ENCODE measurements at regions of chr1 and their contacts with region 1.

Region 1: DNA sequence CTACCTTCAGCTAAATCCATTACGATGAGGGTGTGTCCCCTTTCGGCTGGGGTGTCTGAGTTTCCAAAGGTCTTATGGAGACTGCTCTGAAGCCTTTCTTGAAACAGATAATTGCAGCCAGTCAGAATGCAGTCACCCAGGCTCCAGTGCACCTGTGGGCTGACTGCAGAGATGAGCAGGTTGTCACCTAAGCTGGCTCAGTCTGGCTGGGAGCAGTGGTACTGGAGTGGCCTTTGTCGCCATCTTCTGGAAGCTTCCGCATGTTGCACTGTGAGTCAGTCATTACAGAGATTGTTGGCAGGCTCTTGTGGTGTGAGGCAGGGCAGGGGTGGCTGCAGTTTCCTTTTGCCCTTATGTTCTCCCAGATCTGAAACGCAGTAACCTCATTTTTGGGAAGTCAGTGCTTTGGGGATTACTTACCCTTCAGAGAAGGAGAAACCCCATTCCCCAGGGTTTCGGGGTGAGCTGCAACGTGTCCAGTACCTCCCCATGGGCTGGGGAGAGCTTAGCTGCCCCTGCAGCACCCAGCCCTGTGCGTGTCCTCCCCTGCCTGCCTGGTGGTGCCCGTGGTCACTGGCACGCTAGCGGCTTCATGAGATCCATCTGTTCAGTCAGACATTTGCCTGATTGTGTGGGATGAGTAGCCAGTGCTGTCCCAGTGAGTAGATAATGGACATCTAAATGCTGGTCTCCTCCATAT is 48.0 kb downstream of the SMYD2 start:
- DNase-seq: peak; percentile 69
- ATAC-seq: peak; percentile 90
- H3K4me3 ChIP-seq: no peak overlapping the region
- H3K27ac ChIP-seq: no peak overlapping the region
- H3K4me1 ChIP-seq: 0 out of 2 replicates have a peak, but pooled peaks cover 2% of the 10 kb centered on the region
- H3K27me3 ChIP-seq: no peaks in the 10 kb centered on the region
- CTCF ChIP-seq: peak; percentile 95

Region 2: DNA sequence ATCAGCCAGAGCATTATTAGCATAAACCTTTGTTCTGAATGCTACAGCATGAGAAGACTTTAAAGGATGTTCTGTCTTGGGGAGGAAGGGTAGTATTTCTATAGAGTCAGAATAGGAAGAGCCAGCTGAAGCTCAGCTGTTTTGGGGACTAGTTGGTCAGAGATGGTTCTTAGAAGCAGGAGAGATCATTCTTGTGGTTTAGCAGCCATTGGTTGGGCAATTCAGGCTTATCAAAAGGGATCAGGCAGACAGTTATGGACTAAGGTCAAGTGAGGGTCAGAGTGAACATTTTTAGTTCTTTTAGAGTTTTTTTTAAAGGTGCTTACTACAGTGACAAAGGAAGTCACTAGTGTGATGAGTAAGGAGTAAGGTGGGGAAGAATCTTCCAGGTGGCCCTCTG is 1032.4 kb before region 1 on chr1:
- CTCF ChIA-PET with region 1: no interaction called
- POLR2A ChIA-PET with region 1: no interaction called
- in situ Hi-C with region 1: no loop called
- intact Hi-C with region 1: no loop called
- DNase-seq: no peak
- ATAC-seq: no peak
- H3K4me3 ChIP-seq: no peak overlapping the region
- H3K27ac ChIP-seq: no peak overlapping the region
- H3K4me1 ChIP-seq: no peaks in the 10 kb centered on the region
- H3K27me3 ChIP-seq: no peaks in the 10 kb centered on the region
- CTCF ChIP-seq: no peak

Region 3: DNA sequence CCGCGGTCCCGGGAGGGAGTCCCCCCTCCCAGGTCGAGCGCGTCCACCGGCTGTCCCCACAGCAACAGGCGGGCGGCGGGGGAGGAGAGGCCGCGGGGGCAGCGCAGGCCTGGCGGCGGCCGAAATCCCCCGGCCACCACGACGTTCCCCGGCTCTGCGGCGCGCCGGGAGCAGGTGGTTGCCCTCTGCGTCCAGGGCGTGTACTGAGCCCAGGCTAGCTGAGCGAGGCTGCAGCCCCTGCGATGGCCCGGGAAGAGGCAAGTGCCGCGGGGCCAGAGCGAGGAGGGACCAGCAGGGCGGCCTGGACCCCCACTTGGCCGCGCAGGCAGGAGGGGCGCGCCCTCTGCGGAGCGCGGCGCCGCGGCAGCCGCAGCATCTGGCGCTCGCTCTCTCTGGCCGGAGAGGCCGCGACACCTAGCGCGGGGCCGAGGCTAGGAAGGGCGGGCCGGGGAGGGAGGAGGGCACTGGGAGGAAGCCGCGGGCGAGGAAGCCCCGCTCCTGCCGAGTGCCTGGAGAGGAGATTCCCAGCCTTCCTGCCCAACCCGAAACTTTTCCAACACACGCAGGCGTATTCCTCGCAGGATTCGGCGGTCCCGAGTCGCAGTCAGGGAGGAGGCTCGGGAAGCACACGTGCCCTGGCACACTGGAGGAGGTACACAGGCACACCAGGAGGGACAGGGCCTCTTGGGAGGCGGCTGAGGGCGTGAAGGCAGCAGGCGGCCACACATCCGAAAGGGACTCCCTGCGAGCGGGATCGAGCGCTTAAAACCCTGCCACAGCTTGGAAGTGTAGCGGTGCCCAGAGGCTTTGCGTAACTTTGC is 346.0 kb before region 1 on chr1:
- CTCF ChIA-PET with region 1: interaction called, 12 read pairs
- POLR2A ChIA-PET with region 1: no interaction called
- in situ Hi-C with region 1: no loop called
- intact Hi-C with region 1: no loop called
- DNase-seq: no peak
- ATAC-seq: no peak
- H3K4me3 ChIP-seq: no peak overlapping the region
- H3K27ac ChIP-seq: no peak overlapping the region
- H3K4me1 ChIP-seq: no peaks in the 10 kb centered on the region; the same call in none of the 2 replicates
- H3K27me3 ChIP-seq: peaks cover 13% of the 10 kb centered on the region
- CTCF ChIP-seq: no peak

Region 4: DNA sequence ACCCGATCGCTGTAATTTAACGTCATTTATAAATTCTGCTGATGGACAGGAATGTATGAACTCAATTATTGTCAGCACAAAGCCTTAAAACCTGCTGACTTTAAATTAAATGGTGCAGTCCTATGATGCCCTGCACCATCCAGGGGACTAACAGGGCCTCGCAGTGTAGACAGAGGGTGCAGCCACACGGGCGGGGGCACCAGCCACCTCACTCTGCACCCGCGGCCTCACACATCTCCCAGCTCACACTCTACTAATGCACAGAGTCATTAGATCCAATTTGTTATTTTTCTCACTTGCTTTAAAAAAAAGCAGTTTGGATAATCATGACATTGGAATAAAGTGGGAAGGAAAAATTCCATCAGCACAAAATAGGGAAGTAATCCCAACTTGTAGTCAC is 291.5 kb before region 1 on chr1:
- CTCF ChIA-PET with region 1: no interaction called
- POLR2A ChIA-PET with region 1: no interaction called
- in situ Hi-C with region 1: no loop called
- intact Hi-C with region 1: no loop called
- DNase-seq: no peak
- ATAC-seq: no peak
- H3K4me3 ChIP-seq: no peak overlapping the region
- H3K27ac ChIP-seq: no peak overlapping the region
- H3K4me1 ChIP-seq: no peaks in the 10 kb centered on the region
- H3K27me3 ChIP-seq: peaks cover 7% of the 10 kb centered on the region
- CTCF ChIP-seq: no peak

Region 5: DNA sequence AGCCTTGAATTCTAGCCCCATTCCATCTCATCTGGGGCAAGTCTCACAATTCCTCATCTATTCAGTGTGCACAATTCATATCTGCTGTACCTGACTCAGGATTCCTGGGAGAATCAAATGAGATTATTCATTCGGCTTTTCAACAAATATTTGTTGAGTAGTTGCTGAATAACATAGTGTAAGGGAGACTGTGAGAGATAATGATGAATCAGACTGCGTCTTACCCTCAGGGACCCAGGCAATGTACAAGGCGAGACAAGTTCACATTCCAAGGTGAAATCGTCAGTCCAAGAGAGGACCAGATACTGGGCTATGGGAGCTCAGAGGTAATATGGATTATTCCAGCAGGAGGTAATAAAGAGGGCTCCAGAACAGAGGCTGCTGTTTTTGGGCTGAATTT is 115.8 kb before region 1 on chr1:
- CTCF ChIA-PET with region 1: interaction called, 71 read pairs
- POLR2A ChIA-PET with region 1: interaction called, 3 read pairs
- in situ Hi-C with region 1: no loop called
- intact Hi-C with region 1: loop called (anchors 1 kb)
- DNase-seq: no peak
- ATAC-seq: no peak
- H3K4me3 ChIP-seq: no peak overlapping the region
- H3K27ac ChIP-seq: no peak overlapping the region
- H3K4me1 ChIP-seq: peaks cover 6% of the 10 kb centered on the region
- H3K27me3 ChIP-seq: peaks cover 7% of the 10 kb centered on the region
- CTCF ChIP-seq: no peak

Region 6: GRCh38 chr1:214261206-214262123 is 67.5 kb before region 1 on chr1:
- CTCF ChIA-PET with region 1: interaction called, 21 read pairs
- POLR2A ChIA-PET with region 1: no interaction called
- in situ Hi-C with region 1: no loop called
- intact Hi-C with region 1: loop called (anchors 1 kb)
- DNase-seq: peak; percentile 67
- ATAC-seq: peak; percentile 98
- H3K4me3 ChIP-seq: no peak overlapping the region
- H3K27ac ChIP-seq: peak overlapping the region; percentile 44; the same call in 1 of the 2 replicates
- H3K4me1 ChIP-seq: 0 out of 2 replicates have a peak, but pooled peaks cover 2% of the 10 kb centered on the region
- H3K27me3 ChIP-seq: peaks cover 29% of the 10 kb centered on the region
- CTCF ChIP-seq: peak; percentile 99

Region 7: DNA sequence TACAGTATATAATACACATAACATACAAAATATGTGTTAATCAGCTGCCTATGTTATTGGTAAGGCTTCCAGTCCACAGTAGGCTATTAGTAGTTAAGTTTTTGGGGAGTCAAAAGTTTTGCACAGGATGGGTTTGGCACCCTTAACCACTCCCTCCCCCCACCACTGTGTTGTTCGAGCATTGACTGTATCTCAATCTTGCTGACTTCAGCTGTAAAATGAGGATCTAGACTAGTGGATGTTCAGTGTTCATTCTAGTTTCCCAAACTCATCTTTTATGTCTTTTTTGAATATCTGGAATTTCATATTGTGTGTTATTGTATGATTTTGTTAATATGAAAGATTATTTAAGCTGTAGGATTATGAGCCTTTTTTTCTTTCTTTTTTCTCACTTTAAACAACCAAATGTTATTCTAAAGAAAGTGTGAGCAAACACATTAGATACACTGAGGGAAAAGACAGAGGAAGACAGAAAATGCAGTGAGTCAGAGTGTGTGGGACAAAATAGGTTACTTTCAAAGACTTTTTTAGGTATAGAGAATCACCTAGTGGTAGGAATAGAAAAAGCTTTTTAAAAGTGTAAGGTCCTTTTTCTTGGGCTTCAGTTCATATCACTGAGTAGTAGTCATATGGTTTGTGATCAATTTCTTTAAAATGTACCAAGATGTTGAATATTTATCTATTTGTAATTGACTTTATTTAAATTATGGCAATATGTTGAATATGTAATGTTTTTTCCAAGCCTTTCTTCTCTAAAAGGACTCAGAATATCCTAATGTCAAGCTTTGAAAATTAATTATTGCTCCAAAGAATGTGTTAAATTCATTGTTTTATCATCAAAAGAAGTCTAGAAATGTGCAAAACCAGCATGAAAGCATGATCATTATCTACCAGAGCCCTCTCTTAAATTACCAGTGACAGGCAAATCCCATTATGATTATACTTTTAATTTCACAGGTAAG is 256.2 kb after region 1 on chr1:
- CTCF ChIA-PET with region 1: interaction called, 25 read pairs
- POLR2A ChIA-PET with region 1: no interaction called
- in situ Hi-C with region 1: no loop called
- intact Hi-C with region 1: loop called (anchors 1 kb)
- DNase-seq: peak; percentile 62
- ATAC-seq: peak; percentile 73
- H3K4me3 ChIP-seq: no peak overlapping the region
- H3K27ac ChIP-seq: peak overlapping the region; percentile 86
- H3K4me1 ChIP-seq: peaks cover 43% of the 10 kb centered on the region
- H3K27me3 ChIP-seq: no peaks in the 10 kb centered on the region
- CTCF ChIP-seq: peak; percentile 93; the same call in 1 of the 2 replicates

Measured in Panc1 (cell line).